ENCODE measurements at regions of chr6 and their contacts with region 1.

Region 1: GRCh38 chr6:70686548-70687133 is 19.0 kb downstream of the SMAP1 start:
- DNase-seq: no peak
- ATAC-seq: no peak
- H3K4me3 Mint-ChIP-seq: no peak overlapping the region
- H3K27ac Mint-ChIP-seq: no peak overlapping the region
- H3K4me1 Mint-ChIP-seq: peaks cover 23% of the 10 kb centered on the region
- H3K27me3 Mint-ChIP-seq: no peaks in the 10 kb centered on the region
- CTCF ChIP-seq: peak; percentile 64

Region 2: GRCh38 chr6:70520575-70520974 is 166.1 kb before region 1 on chr6:
- CTCF ChIA-PET with region 1: interaction called, 42 read pairs
- POLR2A ChIA-PET with region 1: no interaction called
- DNase-seq: no peak
- ATAC-seq: no peak; the same call in 1 of the 2 replicates
- H3K4me3 Mint-ChIP-seq: no peak overlapping the region
- H3K27ac Mint-ChIP-seq: no peak overlapping the region
- H3K4me1 Mint-ChIP-seq: peaks cover 5% of the 10 kb centered on the region; the same call in 1 of the 2 replicates
- H3K27me3 Mint-ChIP-seq: no peaks in the 10 kb centered on the region
- CTCF ChIP-seq: no peak

Region 3: GRCh38 chr6:70547313-70547712 is 139.3 kb before region 1 on chr6:
- CTCF ChIA-PET with region 1: interaction called, 17 read pairs
- POLR2A ChIA-PET with region 1: no interaction called
- DNase-seq: no peak
- ATAC-seq: peak; percentile 81
- H3K4me3 Mint-ChIP-seq: no peak overlapping the region
- H3K27ac Mint-ChIP-seq: peak overlapping the region; percentile 24; the same call in 1 of the 2 replicates
- H3K4me1 Mint-ChIP-seq: peaks cover 13% of the 10 kb centered on the region
- H3K27me3 Mint-ChIP-seq: no peaks in the 10 kb centered on the region
- CTCF ChIP-seq: no peak

Region 4: DNA sequence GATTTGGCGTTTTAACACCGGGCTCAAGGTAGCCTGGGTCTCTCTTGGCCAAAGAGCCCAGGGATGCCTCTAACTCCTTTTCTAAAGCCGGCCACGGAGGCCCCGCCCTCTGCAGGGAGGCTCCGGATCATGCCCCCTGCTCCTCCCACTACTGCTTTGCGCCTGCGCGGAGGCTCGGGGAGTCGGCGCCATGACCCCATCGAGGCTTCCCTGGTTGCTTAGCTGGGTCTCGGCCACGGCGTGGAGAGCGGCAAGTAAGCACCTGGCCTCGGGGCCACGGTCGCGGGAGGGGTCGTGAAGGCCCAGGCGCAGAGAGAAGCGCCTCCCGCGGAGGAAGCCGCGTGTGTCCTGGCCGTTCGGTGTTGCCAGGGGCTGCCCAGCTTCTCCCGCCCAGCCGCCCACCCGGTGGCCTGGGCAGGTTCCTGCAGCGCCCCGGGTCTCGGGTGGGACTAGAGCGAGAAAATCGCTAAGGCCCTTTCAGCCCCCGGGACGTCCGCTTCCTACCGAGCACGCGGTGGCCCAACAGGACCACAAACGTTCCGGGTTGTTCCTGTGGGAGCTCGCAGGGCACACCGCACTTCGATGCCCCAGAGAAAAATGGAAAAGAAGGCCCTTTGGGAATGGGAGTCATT is 119.8 kb before region 1 on chr6 and contains the start of gene SDHAF4:
- CTCF ChIA-PET with region 1: interaction called, 12 read pairs
- POLR2A ChIA-PET with region 1: no interaction called
- DNase-seq: peak; percentile 96
- ATAC-seq: peak; percentile 99
- H3K4me3 Mint-ChIP-seq: peak within 1 kb of the TSS; percentile 85
- H3K27ac Mint-ChIP-seq: peak within 1 kb of the TSS; percentile 57; the same call in 1 of the 2 replicates
- H3K4me1 Mint-ChIP-seq: peaks cover 20% of the 10 kb centered on the region
- H3K27me3 Mint-ChIP-seq: peaks cover 11% of the 10 kb centered on the region; the same call in 1 of the 2 replicates
- CTCF ChIP-seq: no peak
- total RNA-seq, gene SDHAF4: 20.0 to 23.1 TPM (median 20.1 TPM) in 3 replicates

Region 5: DNA sequence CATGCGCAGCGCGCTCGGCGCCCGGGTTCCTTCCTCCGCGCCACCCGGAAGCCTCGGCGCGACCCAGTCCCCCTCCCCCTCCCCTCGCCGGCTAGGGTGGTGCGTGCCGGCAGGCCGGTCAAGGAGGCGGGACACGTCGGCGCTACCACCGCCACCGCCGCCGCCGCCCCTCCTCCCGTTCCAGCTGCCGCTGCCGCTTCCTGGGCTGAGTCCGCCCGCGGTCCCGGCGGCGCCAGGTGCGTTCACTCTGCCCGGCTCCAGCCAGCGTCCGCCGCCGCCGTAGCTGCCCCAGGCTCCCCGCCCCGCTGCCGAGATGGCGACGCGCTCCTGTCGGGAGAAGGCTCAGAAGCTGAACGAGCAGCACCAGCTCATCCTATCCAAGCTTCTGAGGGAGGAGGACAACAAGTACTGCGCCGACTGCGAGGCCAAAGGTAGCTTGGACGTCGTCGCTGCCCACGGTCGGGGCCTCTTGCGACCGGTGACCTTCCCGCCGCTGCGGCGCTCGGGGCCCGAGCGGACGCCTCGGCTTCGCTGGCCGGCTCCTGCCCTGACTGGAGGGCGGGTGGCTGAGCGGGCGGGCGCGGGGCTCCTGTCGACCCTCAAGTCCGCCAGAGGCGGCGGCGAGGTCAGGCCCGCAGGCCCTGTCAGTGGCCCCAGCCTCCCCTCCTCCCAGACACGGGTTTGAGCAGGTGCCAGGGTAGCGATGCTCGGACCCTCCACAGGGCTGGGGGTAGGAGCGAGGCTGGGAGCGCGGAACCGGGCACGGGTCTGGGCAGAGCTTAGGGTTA is 18.7 kb before region 1 on chr6 and contains the start of gene SMAP1:
- CTCF ChIA-PET with region 1: interaction called, 16 read pairs
- POLR2A ChIA-PET with region 1: interaction called, 9 read pairs
- DNase-seq: peak; percentile 94
- ATAC-seq: peak; percentile 92
- H3K4me3 Mint-ChIP-seq: peak within 1 kb of the TSS; percentile 78
- H3K27ac Mint-ChIP-seq: peak within 1 kb of the TSS; percentile 81
- H3K4me1 Mint-ChIP-seq: peaks cover 39% of the 10 kb centered on the region
- H3K27me3 Mint-ChIP-seq: no peaks in the 10 kb centered on the region
- CTCF ChIP-seq: no peak
- total RNA-seq, gene SMAP1: 27.6 to 29.0 TPM (median 28.3 TPM) in 3 replicates

Region 6: DNA sequence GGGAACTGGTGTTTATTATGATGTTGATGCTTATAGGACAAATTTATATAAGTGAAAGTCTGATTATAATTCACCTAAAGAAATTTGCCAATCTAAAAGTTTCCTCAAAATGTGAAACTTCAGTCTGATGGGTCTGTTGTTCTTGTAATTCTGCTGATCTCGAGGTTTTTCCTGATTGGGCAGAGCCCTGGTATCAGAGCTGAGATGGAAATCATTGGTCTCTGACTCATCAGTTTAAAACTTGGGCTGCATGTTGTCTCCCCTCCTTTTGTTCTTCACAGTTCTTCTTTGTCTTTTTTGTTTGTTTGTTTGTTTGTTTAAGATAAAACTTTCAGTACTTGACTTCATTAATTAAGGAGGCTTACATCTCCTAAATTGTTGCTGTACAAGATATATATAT is 13.0 kb before region 1 on chr6:
- CTCF ChIA-PET with region 1: interaction called, 16 read pairs
- POLR2A ChIA-PET with region 1: interaction called, 9 read pairs
- DNase-seq: no peak
- ATAC-seq: peak; percentile 62
- H3K4me3 Mint-ChIP-seq: no peak overlapping the region
- H3K27ac Mint-ChIP-seq: no peak overlapping the region
- H3K4me1 Mint-ChIP-seq: peaks cover 37% of the 10 kb centered on the region
- H3K27me3 Mint-ChIP-seq: no peaks in the 10 kb centered on the region
- CTCF ChIP-seq: no peak

Region 7: GRCh38 chr6:70753870-70754380 is 67.3 kb after region 1 on chr6:
- CTCF ChIA-PET with region 1: no interaction called
- POLR2A ChIA-PET with region 1: no interaction called
- DNase-seq: no peak
- ATAC-seq: no peak
- H3K4me3 Mint-ChIP-seq: no peak overlapping the region
- H3K27ac Mint-ChIP-seq: no peak overlapping the region
- H3K4me1 Mint-ChIP-seq: peaks cover 30% of the 10 kb centered on the region
- H3K27me3 Mint-ChIP-seq: no peaks in the 10 kb centered on the region
- CTCF ChIP-seq: no peak